ENCODE measurements at regions of chr2 and their contacts with region 1.

Region 1: DNA sequence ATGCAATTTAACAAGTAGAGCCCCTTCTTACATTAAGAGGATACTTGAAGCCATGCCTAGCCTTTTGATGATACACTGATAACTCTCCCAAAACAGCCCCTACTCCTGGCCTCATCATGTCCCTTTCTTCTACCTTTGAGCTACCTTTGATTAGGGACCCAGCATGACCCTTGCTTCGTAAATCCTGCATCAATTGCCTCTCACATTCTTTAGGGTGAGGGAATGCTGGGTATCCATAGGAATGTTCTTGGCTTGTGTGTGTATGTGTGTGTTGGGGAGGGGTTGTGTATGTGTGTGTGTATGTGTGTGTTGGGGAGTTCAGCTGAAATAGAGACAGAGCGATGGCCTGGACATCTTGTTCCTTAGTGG is 5.3 kb upstream of the KRCC1 start:
- DNase-seq: no peak
- ATAC-seq: no peak
- H3K4me3 ChIP-seq: no peak overlapping the region
- H3K4me3 Mint-ChIP-seq: no peak overlapping the region
- H3K27ac ChIP-seq: no peak overlapping the region
- H3K27ac Mint-ChIP-seq: peak overlapping the region in 1 of 9 donors; percentile 69
- H3K4me1 ChIP-seq: peaks cover 5% of the 10 kb centered on the region in 2 donors
- H3K4me1 Mint-ChIP-seq: peaks cover 9 to 31% (median 19%) of the 10 kb centered on the region in 7 donors
- H3K27me3 ChIP-seq: no peaks in the 10 kb centered on the region
- H3K27me3 Mint-ChIP-seq: peaks cover 0 to 3% (median 0%) of the 10 kb centered on the region in 5 donors

Region 2: DNA sequence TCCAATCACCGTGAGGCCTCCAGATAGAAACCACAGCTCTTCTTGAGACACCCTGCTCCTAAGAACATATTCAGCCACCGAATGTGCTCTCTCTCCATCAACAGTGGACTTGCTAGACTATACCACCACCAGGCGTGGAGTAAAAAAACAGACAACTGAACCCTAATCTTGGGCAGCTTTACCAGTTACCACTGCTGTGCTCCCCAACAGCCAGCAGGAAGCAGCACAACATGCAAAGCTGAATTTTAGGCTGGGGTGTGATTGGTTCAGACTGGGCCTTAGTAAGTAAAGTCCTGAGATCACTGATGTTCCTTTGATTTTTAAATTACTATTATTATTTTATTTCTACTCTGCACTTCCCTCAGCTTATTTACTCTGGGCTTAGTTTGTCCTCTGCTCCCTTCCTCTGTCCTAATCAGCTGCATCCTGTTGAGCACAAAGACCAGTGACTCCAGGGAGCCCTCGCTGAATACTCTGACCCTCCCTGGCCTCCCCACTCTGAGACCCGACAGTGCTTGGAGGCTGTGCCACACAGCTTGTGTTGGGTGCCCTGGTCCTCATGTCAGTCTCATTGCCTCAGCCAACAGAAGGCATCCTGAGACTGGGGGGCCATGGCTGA is 1839.7 kb before region 1 on chr2:
- CTCF ChIA-PET with region 1: no interaction called
- POLR2A ChIA-PET with region 1: no interaction called
- intact Hi-C with region 1: no loop called
- DNase-seq: peak; percentile 32 to 66 (median 46)
- ATAC-seq: peak; percentile 74
- H3K4me3 ChIP-seq: no peak overlapping the region
- H3K4me3 Mint-ChIP-seq: no peak overlapping the region
- H3K27ac ChIP-seq: no peak overlapping the region
- H3K27ac Mint-ChIP-seq: peak overlapping the region in 3 of 9 donors; percentile 24 to 79 (median 62)
- H3K4me1 ChIP-seq: peaks cover 0 to 4% of the 10 kb centered on the region in 2 donors
- H3K4me1 Mint-ChIP-seq: peaks cover 15 to 40% (median 29%) of the 10 kb centered on the region in 7 donors
- H3K27me3 ChIP-seq: no peaks in the 10 kb centered on the region
- H3K27me3 Mint-ChIP-seq: no peaks in the 10 kb centered on the region

Region 3: DNA sequence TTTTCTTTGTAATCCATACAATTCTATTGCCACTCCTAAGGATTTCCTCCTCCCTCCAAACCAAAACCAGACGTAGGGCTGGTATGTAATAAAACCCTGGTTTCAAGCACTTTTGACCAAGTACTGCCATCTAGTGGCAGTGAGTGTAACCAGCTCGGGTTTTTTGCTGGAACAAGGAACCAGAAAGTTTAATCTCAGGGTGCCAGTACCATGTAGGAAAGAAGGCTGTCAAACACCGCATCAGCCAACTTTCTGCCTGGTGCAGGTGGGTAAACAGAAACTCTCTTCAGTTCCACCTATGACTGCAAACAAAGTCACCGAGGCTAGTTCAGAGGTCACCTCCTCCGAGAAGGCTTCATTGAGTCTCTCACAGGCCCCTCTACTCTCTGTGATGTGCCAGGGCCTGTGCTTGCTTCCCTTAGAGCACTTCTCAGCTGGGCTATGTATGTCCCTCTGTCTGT is 99.1 kb after region 1 on chr2:
- CTCF ChIA-PET with region 1: interaction called, 115 read pairs
- POLR2A ChIA-PET with region 1: no interaction called
- intact Hi-C with region 1: loop called (anchors 1 kb)
- DNase-seq: peak in 8 of 9 donors; percentile 22 to 65 (median 57)
- ATAC-seq: peak; percentile 82
- H3K4me3 ChIP-seq: no peak overlapping the region
- H3K4me3 Mint-ChIP-seq: no peak overlapping the region
- H3K27ac ChIP-seq: no peak overlapping the region
- H3K27ac Mint-ChIP-seq: no peak overlapping the region
- H3K4me1 ChIP-seq: no peaks in the 10 kb centered on the region
- H3K4me1 Mint-ChIP-seq: peaks cover 0 to 5% (median 0%) of the 10 kb centered on the region in 7 donors
- H3K27me3 ChIP-seq: no peaks in the 10 kb centered on the region
- H3K27me3 Mint-ChIP-seq: peaks cover 0 to 12% (median 0%) of the 10 kb centered on the region in 5 donors

Region 4: GRCh38 chr2:88227446-88227845 is 166.6 kb after region 1 on chr2:
- CTCF ChIA-PET with region 1: no interaction called
- POLR2A ChIA-PET with region 1: no interaction called
- intact Hi-C with region 1: no loop called
- DNase-seq: no peak
- ATAC-seq: no peak
- H3K4me3 ChIP-seq: no peak overlapping the region
- H3K4me3 Mint-ChIP-seq: no peak overlapping the region
- H3K27ac ChIP-seq: no peak overlapping the region
- H3K27ac Mint-ChIP-seq: no peak overlapping the region
- H3K4me1 ChIP-seq: no peaks in the 10 kb centered on the region
- H3K4me1 Mint-ChIP-seq: no peaks in the 10 kb centered on the region
- H3K27me3 ChIP-seq: no peaks in the 10 kb centered on the region
- H3K27me3 Mint-ChIP-seq: peaks cover 3 to 19% (median 12%) of the 10 kb centered on the region in 5 donors

Measured in naive thymus-derived CD4-positive, alpha-beta T cell (primary cell).